Sigmoid colon (tissue), 7 donors: ENCODE measurements at regions of chr16 and their contacts with region 1.

Region 1: DNA sequence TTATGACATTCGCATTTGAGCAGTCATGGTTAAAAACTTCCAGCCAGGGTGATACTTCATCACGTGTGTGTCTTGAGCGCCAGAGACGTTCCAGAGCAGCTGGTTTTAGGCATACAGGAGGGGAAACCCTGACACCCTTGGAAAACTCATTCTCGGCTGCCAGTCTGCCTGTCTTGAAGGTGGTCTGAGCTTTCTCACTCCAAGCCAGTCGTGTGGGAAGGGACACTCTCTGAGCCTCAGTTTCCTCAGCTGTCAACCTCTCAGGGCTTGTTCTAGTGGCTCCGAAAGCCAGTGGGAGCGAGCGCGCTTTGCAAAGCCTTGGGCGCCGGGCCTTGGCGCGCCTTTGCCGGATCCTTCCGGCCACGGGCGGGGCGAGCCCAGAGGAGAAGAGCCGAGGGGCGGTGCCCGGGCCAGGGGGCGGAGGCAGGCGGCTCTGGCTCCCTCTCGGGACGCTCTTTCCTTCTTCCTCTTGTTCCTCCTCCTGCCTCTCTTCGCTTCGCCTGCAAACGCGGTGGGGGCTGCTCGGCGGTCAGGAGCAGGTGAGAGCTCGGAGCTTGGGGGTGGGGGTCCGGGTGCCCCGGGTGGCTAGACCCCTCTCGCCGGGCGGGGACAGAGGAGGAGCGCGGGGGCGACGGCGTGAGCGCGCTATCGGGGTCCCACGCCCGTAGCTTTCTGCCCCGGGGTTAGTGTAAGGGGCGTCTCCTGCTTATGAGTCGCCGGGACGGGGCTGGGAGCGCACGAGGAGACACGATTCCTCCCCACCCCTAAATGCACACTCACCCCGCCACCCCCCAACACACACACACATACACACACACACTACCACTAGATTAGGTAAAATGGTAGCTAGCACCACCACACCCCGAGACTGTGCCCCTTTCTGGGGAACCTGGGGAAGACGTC is at the start of gene LDAF1:
- DNase-seq: peak; percentile 93
- H3K4me3 ChIP-seq: peak within 1 kb of the TSS; percentile 56 to 79 (median 59)
- H3K27ac ChIP-seq: peak within 1 kb of the TSS; percentile 85 to 93 (median 89)
- H3K4me1 ChIP-seq: peaks cover 0 to 54% (median 52%) of the 10 kb centered on the region in 4 donors
- H3K27me3 ChIP-seq: no peaks in the 10 kb centered on the region
- CTCF ChIP-seq: no peak
- EP300 ChIP-seq: no peak
- POLR2A ChIP-seq: peak; percentile 61
- total RNA-seq, gene LDAF1: 111 to 158 (median 123) TPM

Region 2: GRCh38 chr16:20849587-20850390 is 308.7 kb before region 1 on chr16:
- intact Hi-C with region 1: loop called (anchors 5 kb)
- DNase-seq: peak; percentile 84
- H3K4me3 ChIP-seq: no peak overlapping the region
- H3K27ac ChIP-seq: peak overlapping the region; percentile 79 to 90 (median 82)
- H3K4me1 ChIP-seq: peaks cover 0 to 49% (median 43%) of the 10 kb centered on the region in 4 donors
- H3K27me3 ChIP-seq: no peaks in the 10 kb centered on the region
- CTCF ChIP-seq: peak; percentile 88 to 99 (median 98)
- EP300 ChIP-seq: no peak
- POLR2A ChIP-seq: no peak

Region 3: GRCh38 chr16:21277927-21278706 is 119.7 kb after region 1 on chr16 and contains the start of gene CRYM:
- intact Hi-C with region 1: loop called (anchors 5 kb)
- DNase-seq: peak; percentile 79
- H3K4me3 ChIP-seq: peak within 1 kb of the TSS; percentile 19 to 53 (median 44)
- H3K27ac ChIP-seq: peak within 1 kb of the TSS in 3 of 4 donors; percentile 36 to 50 (median 36)
- H3K4me1 ChIP-seq: peaks cover 0 to 11% (median 8%) of the 10 kb centered on the region in 4 donors
- H3K27me3 ChIP-seq: peaks cover 0 to 25% (median 0%) of the 10 kb centered on the region in 3 donors
- CTCF ChIP-seq: peak; percentile 52 to 96 (median 70)
- EP300 ChIP-seq: no peak
- POLR2A ChIP-seq: no peak
- total RNA-seq, gene CRYM: 1.6 to 6.1 (median 4.6) TPM

Region 4: DNA sequence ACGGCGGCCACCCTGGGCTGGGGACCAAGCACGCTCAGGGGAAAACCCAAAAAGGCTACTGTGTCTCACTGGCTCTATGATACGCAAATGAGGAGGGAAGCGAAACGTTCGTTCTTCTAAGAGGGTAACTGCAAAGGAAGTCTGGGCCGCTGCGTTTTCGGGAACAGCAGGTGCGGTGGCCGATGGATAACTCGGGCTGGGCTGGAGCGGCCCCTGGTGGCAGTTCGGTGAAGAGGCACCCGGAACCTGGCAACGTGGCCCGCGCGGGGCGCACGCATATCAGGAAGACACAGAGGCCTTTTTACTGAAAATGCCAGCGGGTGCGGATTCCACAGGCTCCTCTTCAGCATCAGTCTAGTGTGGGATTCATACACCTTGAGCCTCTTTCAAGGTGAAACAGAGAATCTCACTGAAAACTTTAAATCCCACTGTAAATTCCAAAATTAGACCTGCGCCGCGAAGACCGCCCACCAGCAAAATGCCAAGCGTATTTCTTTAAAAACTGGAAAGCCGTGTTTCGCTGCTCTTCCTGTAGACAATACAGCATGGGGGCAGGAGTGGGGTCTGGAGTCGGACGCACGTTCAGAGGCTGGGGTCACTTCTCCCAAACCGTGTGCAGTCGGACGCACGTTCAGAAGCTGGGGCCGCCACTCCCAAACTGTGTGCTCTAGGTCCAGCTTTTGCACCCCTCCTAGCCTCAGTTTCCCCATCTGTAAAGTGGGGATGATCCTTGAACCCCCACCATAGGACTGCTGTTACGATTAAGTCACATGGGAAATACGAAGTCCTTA is 396.5 kb after region 1 on chr16:
- intact Hi-C with region 1: loop called (anchors 10 kb)
- DNase-seq: peak; percentile 95
- H3K4me3 ChIP-seq: peak overlapping the region in 1 of 4 donors; percentile 21
- H3K27ac ChIP-seq: no peak overlapping the region
- H3K4me1 ChIP-seq: peaks cover 0 to 12% (median 10%) of the 10 kb centered on the region in 4 donors
- H3K27me3 ChIP-seq: peaks cover 0 to 9% (median 0%) of the 10 kb centered on the region in 3 donors
- CTCF ChIP-seq: peak; percentile 98 to 100 (median 99)
- EP300 ChIP-seq: no peak
- POLR2A ChIP-seq: no peak